ENCODE measurements at regions of chr7 and their contacts with region 1.

Region 1: DNA sequence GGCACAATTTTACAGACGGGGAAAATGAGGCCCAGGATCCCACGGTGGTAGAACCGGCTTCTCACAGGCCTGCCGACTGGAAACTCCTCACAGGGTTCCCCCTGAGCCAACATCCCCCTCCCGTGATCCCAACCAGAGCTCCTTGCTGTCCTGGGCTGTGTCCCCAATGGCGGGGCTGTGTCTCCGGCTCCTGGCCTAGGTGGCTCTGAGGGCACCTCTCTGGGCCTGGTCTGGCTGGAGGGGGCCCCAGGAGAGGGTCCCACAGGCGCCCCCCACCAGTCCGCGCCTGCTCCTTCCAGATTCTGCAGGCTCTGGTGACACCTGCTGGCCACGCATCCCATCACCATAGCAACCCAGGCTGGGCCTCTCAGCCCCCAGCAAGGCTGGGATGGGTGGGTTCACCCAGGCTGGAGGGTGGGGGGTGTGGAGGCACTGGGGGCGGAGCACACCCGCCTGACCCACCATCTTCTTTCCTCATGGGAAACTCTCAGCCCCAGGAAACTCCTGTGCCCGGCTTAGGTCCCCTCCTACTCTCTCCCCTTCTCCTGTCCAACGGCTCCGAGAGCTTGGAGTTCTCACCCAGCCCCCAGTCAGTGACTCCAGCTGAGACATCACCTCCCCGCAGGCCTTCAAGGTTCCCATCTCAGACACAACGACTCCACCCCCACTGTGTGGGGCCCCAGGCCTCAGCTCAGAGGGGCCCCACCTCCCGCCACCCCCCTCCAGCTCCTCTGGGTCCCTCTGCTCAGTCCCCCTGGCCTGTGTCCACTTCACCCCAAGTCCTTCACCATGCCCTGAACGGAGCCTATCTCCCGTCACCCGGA is 27.1 kb upstream of the TNRC18 start:
- DNase-seq: peak; percentile 41 to 58
- ATAC-seq: peak; percentile 73 to 85
- H3K4me3 ChIP-seq: no peak overlapping the region
- H3K27ac ChIP-seq: no peak overlapping the region
- H3K4me1 ChIP-seq: peaks cover 18% of the 10 kb centered on the region; the same call in 2 of the 3 replicates
- CTCF ChIP-seq: peak; percentile 81
- EP300 ChIP-seq: no peak
- POLR2A ChIP-seq: no peak
- RAD21 ChIP-seq: peak; percentile 91 to 93

Region 2: DNA sequence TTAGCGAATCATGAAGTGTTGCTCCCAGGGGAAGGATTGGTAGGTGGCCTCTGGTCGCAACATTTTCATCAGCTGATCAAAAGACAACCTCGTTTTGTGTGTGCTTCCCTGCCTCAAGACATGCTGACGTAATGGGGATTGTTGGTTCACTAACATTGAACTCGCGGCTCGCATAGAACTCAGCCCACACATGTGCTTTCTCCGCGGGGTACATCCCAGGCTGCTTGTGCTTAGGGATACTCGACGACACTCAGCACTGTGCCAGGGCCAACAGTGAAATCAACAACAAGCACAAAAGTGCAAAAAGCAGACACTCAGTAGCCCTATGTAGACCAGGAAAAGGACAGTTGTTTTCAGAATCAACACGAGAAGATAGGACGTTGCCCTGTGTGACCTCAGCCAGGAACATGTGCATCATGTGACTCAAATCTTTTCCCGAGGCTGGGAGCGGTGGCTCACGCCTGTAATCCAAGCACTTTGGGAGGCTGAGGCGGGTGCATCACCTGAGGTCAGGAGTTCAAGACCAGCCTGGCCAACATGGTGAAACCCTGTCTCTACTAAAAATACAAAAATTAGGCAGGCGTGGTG is 239.9 kb before region 1 on chr7:
- CTCF ChIA-PET with region 1: no interaction called
- POLR2A ChIA-PET with region 1: no interaction called
- DNase-seq: no peak
- ATAC-seq: no peak
- H3K4me3 ChIP-seq: no peak overlapping the region
- H3K27ac ChIP-seq: no peak overlapping the region
- H3K4me1 ChIP-seq: no peaks in the 10 kb centered on the region
- CTCF ChIP-seq: no peak
- EP300 ChIP-seq: no peak
- POLR2A ChIP-seq: no peak
- RAD21 ChIP-seq: no peak

Region 3: DNA sequence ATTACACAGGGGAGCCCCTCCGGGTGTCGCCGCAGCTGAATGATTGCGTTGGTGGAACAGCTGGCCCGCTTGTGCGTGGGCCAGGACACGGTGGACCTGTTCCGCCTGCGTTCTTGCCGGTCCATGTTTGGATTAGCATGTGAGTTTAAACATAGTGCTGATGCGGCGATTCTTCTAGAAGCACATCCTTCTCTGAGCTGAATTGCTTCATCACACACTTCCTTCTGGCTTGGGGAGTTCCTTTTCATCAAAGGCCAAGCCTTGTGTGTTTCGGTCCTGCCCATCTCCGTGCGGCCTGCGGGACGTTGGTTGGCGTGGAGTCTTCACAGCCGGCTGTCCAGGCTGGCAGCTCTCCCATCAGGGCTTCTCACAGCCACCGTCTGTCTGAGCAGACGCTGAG is 213.5 kb before region 1 on chr7:
- CTCF ChIA-PET with region 1: interaction called, 30 read pairs
- POLR2A ChIA-PET with region 1: interaction called, 4 read pairs
- DNase-seq: no peak
- ATAC-seq: no peak
- H3K4me3 ChIP-seq: no peak overlapping the region
- H3K27ac ChIP-seq: no peak overlapping the region
- H3K4me1 ChIP-seq: no peaks in the 10 kb centered on the region
- CTCF ChIP-seq: no peak
- EP300 ChIP-seq: no peak
- POLR2A ChIP-seq: no peak
- RAD21 ChIP-seq: no peak

Region 4: DNA sequence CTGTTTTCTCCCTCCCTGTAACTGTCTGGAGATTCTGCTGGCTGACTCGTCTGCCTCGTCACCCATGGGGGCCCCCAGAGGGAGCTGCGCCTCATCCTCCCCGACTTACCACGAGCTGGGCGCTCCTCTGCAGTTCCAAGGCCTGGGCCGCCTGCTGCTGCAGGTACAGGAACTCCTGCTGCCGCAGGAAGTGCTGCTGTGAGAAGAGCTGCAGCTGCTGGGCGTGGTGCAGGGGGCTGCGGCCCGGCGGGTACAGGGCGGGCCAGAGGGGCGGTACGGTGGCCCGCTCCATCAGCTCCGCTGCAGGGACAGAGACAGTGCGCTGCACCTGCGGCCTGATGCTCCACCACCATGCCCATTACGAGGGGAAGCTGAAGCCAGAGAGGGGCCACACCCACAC is 74.8 kb before region 1 on chr7:
- CTCF ChIA-PET with region 1: interaction called, 11 read pairs
- POLR2A ChIA-PET with region 1: no interaction called
- DNase-seq: no peak
- ATAC-seq: no peak; a peak in 2 of 6 replicates
- H3K4me3 ChIP-seq: no peak overlapping the region
- H3K27ac ChIP-seq: no peak overlapping the region
- H3K4me1 ChIP-seq: no peaks in the 10 kb centered on the region
- CTCF ChIP-seq: no peak
- EP300 ChIP-seq: no peak
- POLR2A ChIP-seq: no peak
- RAD21 ChIP-seq: no peak

Region 5: GRCh38 chr7:5396999-5397663 is 53.6 kb before region 1 on chr7:
- CTCF ChIA-PET with region 1: interaction called, 50 read pairs
- POLR2A ChIA-PET with region 1: interaction called, 6 read pairs
- DNase-seq: peak; percentile 96 to 99
- ATAC-seq: peak; percentile 94 to 97
- H3K4me3 ChIP-seq: peak overlapping the region; percentile 74
- H3K27ac ChIP-seq: peak overlapping the region; percentile 96 to 98
- H3K4me1 ChIP-seq: peaks cover 21% of the 10 kb centered on the region
- CTCF ChIP-seq: no peak
- EP300 ChIP-seq: peak in 1 of 2 experiments; percentile 42; a peak in 2 of 5 replicates
- POLR2A ChIP-seq: peak; percentile 62
- RAD21 ChIP-seq: no peak; a peak in 1 of 5 replicates

Region 6: GRCh38 chr7:5423844-5424688 is 26.7 kb before region 1 on chr7:
- CTCF ChIA-PET with region 1: interaction called, 21 read pairs
- POLR2A ChIA-PET with region 1: no interaction called
- DNase-seq: peak; percentile 80 to 98
- ATAC-seq: peak; percentile 16 to 25
- H3K4me3 ChIP-seq: peak overlapping the region; percentile 74
- H3K27ac ChIP-seq: peak overlapping the region; percentile 88 to 96
- H3K4me1 ChIP-seq: peaks cover 21% of the 10 kb centered on the region
- CTCF ChIP-seq: no peak
- EP300 ChIP-seq: no peak
- POLR2A ChIP-seq: no peak
- RAD21 ChIP-seq: no peak

Region 7: GRCh38 chr7:5435289-5436002 is 15.3 kb before region 1 on chr7:
- CTCF ChIA-PET with region 1: interaction called, 45 read pairs
- POLR2A ChIA-PET with region 1: no interaction called
- DNase-seq: no peak
- ATAC-seq: no peak
- H3K4me3 ChIP-seq: no peak overlapping the region
- H3K27ac ChIP-seq: no peak overlapping the region
- H3K4me1 ChIP-seq: no peaks in the 10 kb centered on the region
- CTCF ChIP-seq: no peak
- EP300 ChIP-seq: no peak
- POLR2A ChIP-seq: no peak
- RAD21 ChIP-seq: no peak

Region 8: GRCh38 chr7:5462216-5462615 is 11.5 kb after region 1 on chr7:
- CTCF ChIA-PET with region 1: interaction called, 15 read pairs
- POLR2A ChIA-PET with region 1: no interaction called
- DNase-seq: no peak
- ATAC-seq: no peak
- H3K4me3 ChIP-seq: no peak overlapping the region
- H3K27ac ChIP-seq: no peak overlapping the region
- H3K4me1 ChIP-seq: no peaks in the 10 kb centered on the region
- CTCF ChIP-seq: no peak
- EP300 ChIP-seq: no peak
- POLR2A ChIP-seq: no peak
- RAD21 ChIP-seq: no peak

Region 9: GRCh38 chr7:5549096-5549763 is 98.5 kb after region 1 on chr7:
- CTCF ChIA-PET with region 1: no interaction called
- POLR2A ChIA-PET with region 1: no interaction called
- DNase-seq: peak; percentile 89 to 91
- ATAC-seq: peak; percentile 87 to 93
- H3K4me3 ChIP-seq: no peak overlapping the region; the same call in 2 of the 3 replicates
- H3K27ac ChIP-seq: peak overlapping the region; percentile 81 to 86
- H3K4me1 ChIP-seq: peaks cover 25% of the 10 kb centered on the region
- CTCF ChIP-seq: no peak
- EP300 ChIP-seq: no peak
- POLR2A ChIP-seq: no peak
- RAD21 ChIP-seq: no peak

Region 10: GRCh38 chr7:5567790-5568189 is 117.0 kb after region 1 on chr7:
- CTCF ChIA-PET with region 1: no interaction called
- POLR2A ChIA-PET with region 1: no interaction called
- DNase-seq: peak in 1 of 2 experiments; percentile 51
- ATAC-seq: no peak
- H3K4me3 ChIP-seq: no peak overlapping the region
- H3K27ac ChIP-seq: peak overlapping the region in 1 of 2 experiments; percentile 45; a peak in 1 of 6 replicates
- H3K4me1 ChIP-seq: peaks cover 18% of the 10 kb centered on the region
- CTCF ChIP-seq: no peak
- EP300 ChIP-seq: no peak
- POLR2A ChIP-seq: no peak
- RAD21 ChIP-seq: no peak

Measured in A549 (cell line).